Body of pancreas (tissue), 4 donors: ENCODE measurements at regions of chr2 and their contacts with region 1.

Region 1: DNA sequence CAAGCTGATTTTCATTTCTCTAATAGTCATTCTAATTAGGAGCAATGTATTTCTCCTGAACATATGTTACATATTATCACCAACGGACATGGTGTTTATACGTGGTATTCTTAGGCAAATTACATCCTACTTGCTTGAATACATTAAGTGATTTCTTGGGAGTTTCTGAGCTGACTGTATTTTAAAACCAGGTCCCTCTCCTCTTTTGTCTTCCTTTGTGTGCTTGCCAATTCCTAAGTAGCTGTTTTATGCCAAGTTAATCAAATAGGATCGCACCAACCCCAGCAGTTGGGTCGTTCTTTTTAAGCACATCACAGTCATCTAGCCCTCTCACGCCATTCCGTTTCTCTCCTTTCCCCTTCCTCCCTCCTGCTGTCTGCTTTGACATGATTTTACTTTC is 75.4 kb upstream of the MAP2 start:
- DNase-seq: no peak
- ATAC-seq: no peak
- H3K4me3 ChIP-seq: no peak overlapping the region
- H3K27ac ChIP-seq: no peak overlapping the region
- H3K4me1 ChIP-seq: no peaks in the 10 kb centered on the region
- H3K27me3 ChIP-seq: no peaks in the 10 kb centered on the region
- CTCF ChIP-seq: no peak
- POLR2A ChIP-seq: no peak

Region 2: GRCh38 chr2:209191139-209191538 is 157.3 kb before region 1 on chr2:
- intact Hi-C with region 1: no loop called
- DNase-seq: no peak
- ATAC-seq: no peak
- H3K4me3 ChIP-seq: no peak overlapping the region
- H3K27ac ChIP-seq: no peak overlapping the region
- H3K4me1 ChIP-seq: no peaks in the 10 kb centered on the region
- H3K27me3 ChIP-seq: no peaks in the 10 kb centered on the region
- CTCF ChIP-seq: no peak
- POLR2A ChIP-seq: no peak

Region 3: GRCh38 chr2:209556354-209556961 is 208.0 kb after region 1 on chr2:
- intact Hi-C with region 1: loop called (anchors 10 kb)
- DNase-seq: peak in 3 of 4 donors; percentile 19 to 23 (median 20)
- ATAC-seq: peak; percentile 56
- H3K4me3 ChIP-seq: no peak overlapping the region
- H3K27ac ChIP-seq: no peak overlapping the region
- H3K4me1 ChIP-seq: no peaks in the 10 kb centered on the region
- H3K27me3 ChIP-seq: no peaks in the 10 kb centered on the region
- CTCF ChIP-seq: peak in 6 of 7 experiments; percentile 18 to 68 (median 48)
- POLR2A ChIP-seq: no peak